AG04450 (cell line): ENCODE measurements at regions of chr15 and their contacts with region 1.

Region 1: GRCh38 chr15:40028853-40029252 is 10.1 kb downstream of the SRP14 start:
- DNase-seq: no peak
- H3K4me3 ChIP-seq: no peak overlapping the region
- H3K27ac ChIP-seq: no peak overlapping the region
- H3K27me3 ChIP-seq: no peaks in the 10 kb centered on the region
- CTCF ChIP-seq: no peak

Region 2: GRCh38 chr15:39774688-39775267 is 254.1 kb before region 1 on chr15:
- CTCF ChIA-PET with region 1: no interaction called
- POLR2A ChIA-PET with region 1: no interaction called
- DNase-seq: no peak
- H3K4me3 ChIP-seq: no peak overlapping the region
- H3K27ac ChIP-seq: no peak overlapping the region
- H3K27me3 ChIP-seq: no peaks in the 10 kb centered on the region
- CTCF ChIP-seq: no peak

Region 3: DNA sequence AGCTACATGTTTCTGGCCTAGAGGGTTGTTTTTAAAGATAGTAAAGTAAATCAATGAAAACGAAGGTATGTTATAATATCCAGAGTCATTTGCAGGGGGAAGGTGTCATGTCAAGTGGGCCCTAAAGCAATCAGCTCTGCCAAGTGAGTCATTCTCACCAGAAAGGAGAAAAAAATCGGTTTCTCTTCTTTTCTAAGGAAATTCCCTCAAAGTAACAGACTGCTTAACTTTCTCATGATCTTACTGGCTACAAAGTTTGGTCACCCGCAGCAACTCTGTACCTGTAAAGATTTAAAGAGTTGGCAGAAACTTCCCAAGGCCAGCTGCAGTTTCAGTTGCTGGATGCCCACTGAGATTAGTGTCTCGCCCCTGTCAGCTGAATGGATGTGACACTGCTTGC is 240.7 kb before region 1 on chr15:
- CTCF ChIA-PET with region 1: interaction called, 11 read pairs
- POLR2A ChIA-PET with region 1: no interaction called
- DNase-seq: no peak
- H3K4me3 ChIP-seq: no peak overlapping the region
- H3K27ac ChIP-seq: no peak overlapping the region
- H3K27me3 ChIP-seq: no peaks in the 10 kb centered on the region
- CTCF ChIP-seq: no peak

Region 4: DNA sequence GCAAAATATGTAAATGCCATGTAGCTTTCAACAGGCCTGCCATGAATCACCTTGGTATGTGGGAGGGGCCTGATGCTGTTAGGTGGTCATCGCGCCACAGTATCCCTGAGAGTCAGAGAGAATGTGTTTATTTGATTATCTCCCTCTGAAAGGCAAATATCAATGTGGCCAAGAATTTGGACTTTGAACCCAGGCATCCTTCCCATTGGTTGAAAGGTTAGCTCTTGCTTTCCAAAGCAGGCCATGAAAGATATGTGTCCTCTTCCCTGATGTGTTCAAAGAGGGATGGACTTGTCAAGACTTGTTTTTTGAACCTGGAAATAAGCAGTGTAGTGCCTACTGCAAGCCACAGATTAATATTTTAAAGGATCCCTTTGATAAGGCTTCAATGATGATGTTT is 26.6 kb before region 1 on chr15:
- CTCF ChIA-PET with region 1: no interaction called
- POLR2A ChIA-PET with region 1: no interaction called
- DNase-seq: peak; percentile 8
- H3K4me3 ChIP-seq: no peak overlapping the region
- H3K27ac ChIP-seq: no peak overlapping the region
- H3K27me3 ChIP-seq: no peaks in the 10 kb centered on the region
- CTCF ChIP-seq: no peak

Region 5: DNA sequence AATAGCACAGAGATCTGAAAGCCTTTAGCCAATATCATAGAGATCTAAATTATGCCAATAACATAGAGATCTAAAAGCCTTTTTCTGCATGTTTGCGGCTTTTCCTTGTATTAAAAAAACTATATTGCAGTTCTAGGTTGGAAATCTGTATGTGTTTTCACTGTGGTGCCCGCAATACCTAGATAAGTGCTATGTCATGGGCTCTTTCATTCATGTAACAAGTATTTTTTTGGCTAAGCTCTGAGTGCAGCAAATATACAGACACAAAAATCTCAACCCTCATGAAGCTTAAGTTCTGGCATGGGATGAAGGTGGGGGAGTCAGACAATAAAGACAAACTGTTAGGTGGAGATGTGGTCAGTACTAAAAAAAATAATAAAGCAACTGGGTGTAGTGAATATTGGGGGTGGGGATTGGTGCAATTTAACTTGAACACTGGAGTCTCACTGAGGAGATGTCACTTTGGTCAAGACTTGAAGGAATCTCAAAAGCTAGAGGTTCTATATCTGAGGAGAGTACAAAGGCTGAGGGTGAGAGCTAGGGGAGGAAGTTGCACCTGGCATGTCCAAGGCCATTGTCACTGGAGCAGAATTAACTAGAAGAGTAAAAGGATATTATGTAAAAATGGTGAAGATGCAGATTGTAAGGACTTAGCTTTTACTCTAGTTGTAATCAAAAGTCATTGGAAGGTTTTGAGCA is 133.0 kb after region 1 on chr15:
- CTCF ChIA-PET with region 1: interaction called, 10 read pairs
- POLR2A ChIA-PET with region 1: no interaction called
- DNase-seq: no peak
- H3K4me3 ChIP-seq: peak overlapping the region; percentile 99
- H3K27ac ChIP-seq: no peak overlapping the region
- H3K27me3 ChIP-seq: no peaks in the 10 kb centered on the region
- CTCF ChIP-seq: no peak

Region 6: GRCh38 chr15:40301467-40302179 is 272.8 kb after region 1 on chr15:
- CTCF ChIA-PET with region 1: no interaction called
- POLR2A ChIA-PET with region 1: no interaction called
- DNase-seq: no peak
- H3K4me3 ChIP-seq: no peak overlapping the region
- H3K27ac ChIP-seq: no peak overlapping the region
- H3K27me3 ChIP-seq: peaks cover 68% of the 10 kb centered on the region
- CTCF ChIP-seq: no peak